Naive thymus-derived CD4-positive, alpha-beta T cell (primary cell): ENCODE measurements at regions of chr22 and their contacts with region 1.

Region 1: GRCh38 chr22:38201710-38202436 is at the start of gene MAFF:
- DNase-seq: peak; percentile 62 to 88 (median 72)
- ATAC-seq: peak; percentile 87
- H3K4me3 ChIP-seq: peak within 1 kb of the TSS; percentile 77
- H3K4me3 Mint-ChIP-seq: peak within 1 kb of the TSS; percentile 80 to 93 (median 88)
- H3K27ac ChIP-seq: peak within 1 kb of the TSS; percentile 88
- H3K27ac Mint-ChIP-seq: peak within 1 kb of the TSS; percentile 84 to 97 (median 89)
- H3K4me1 ChIP-seq: peaks cover 5 to 25% of the 10 kb centered on the region in 2 donors
- H3K4me1 Mint-ChIP-seq: peaks cover 10 to 33% (median 26%) of the 10 kb centered on the region in 7 donors
- H3K27me3 ChIP-seq: no peaks in the 10 kb centered on the region
- H3K27me3 Mint-ChIP-seq: no peaks in the 10 kb centered on the region
- total RNA-seq, gene MAFF: 4.8 to 72.6 (median 5.5) TPM

Region 2: GRCh38 chr22:38069372-38070249 is 132.3 kb before region 1 on chr22:
- CTCF ChIA-PET with region 1: no interaction called
- POLR2A ChIA-PET with region 1: no interaction called
- intact Hi-C with region 1: no loop called
- DNase-seq: no peak
- ATAC-seq: no peak
- H3K4me3 ChIP-seq: no peak overlapping the region
- H3K4me3 Mint-ChIP-seq: no peak overlapping the region
- H3K27ac ChIP-seq: no peak overlapping the region
- H3K27ac Mint-ChIP-seq: no peak overlapping the region
- H3K4me1 ChIP-seq: no peaks in the 10 kb centered on the region
- H3K4me1 Mint-ChIP-seq: no peaks in the 10 kb centered on the region
- H3K27me3 ChIP-seq: no peaks in the 10 kb centered on the region
- H3K27me3 Mint-ChIP-seq: no peaks in the 10 kb centered on the region

Region 3: DNA sequence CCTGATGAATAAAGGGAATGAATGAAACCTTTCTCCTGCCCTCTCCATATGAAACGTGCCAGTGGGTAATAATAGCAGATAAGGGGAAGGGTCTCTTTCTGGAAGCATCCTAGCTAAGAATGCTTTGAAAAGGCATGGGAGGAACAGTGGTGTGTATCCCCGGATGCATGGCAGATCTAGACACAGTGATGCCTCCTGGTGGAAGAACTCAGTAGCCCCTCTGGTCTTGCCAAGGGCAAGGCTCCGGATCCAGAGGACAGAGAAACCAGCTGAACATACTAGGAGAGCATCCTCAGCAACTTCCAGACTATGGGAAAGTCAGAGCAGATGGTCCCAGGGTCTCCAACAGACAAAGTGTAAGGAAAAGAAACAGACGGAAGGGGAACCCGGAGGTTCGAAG is 97.8 kb before region 1 on chr22:
- CTCF ChIA-PET with region 1: no interaction called
- POLR2A ChIA-PET with region 1: no interaction called
- intact Hi-C with region 1: no loop called
- DNase-seq: no peak
- ATAC-seq: no peak
- H3K4me3 ChIP-seq: no peak overlapping the region
- H3K4me3 Mint-ChIP-seq: no peak overlapping the region
- H3K27ac ChIP-seq: no peak overlapping the region
- H3K27ac Mint-ChIP-seq: no peak overlapping the region
- H3K4me1 ChIP-seq: no peaks in the 10 kb centered on the region
- H3K4me1 Mint-ChIP-seq: peaks cover 0 to 19% (median 9%) of the 10 kb centered on the region in 7 donors
- H3K27me3 ChIP-seq: no peaks in the 10 kb centered on the region
- H3K27me3 Mint-ChIP-seq: no peaks in the 10 kb centered on the region

Region 4: GRCh38 chr22:38114484-38115398 is 87.1 kb before region 1 on chr22:
- CTCF ChIA-PET with region 1: no interaction called
- POLR2A ChIA-PET with region 1: no interaction called
- intact Hi-C with region 1: loop called in 1 of 2 experiments (anchors 10 kb)
- DNase-seq: peak; percentile 42 to 83 (median 67)
- ATAC-seq: peak; percentile 92
- H3K4me3 ChIP-seq: no peak overlapping the region
- H3K4me3 Mint-ChIP-seq: peak overlapping the region in 1 of 10 donors; percentile 41
- H3K27ac ChIP-seq: no peak overlapping the region
- H3K27ac Mint-ChIP-seq: peak overlapping the region in 2 of 9 donors; percentile 57 to 81
- H3K4me1 ChIP-seq: no peaks in the 10 kb centered on the region
- H3K4me1 Mint-ChIP-seq: peaks cover 0 to 6% (median 4%) of the 10 kb centered on the region in 7 donors
- H3K27me3 ChIP-seq: no peaks in the 10 kb centered on the region
- H3K27me3 Mint-ChIP-seq: no peaks in the 10 kb centered on the region

Region 5: GRCh38 chr22:38176170-38176741 is 25.6 kb before region 1 on chr22:
- CTCF ChIA-PET with region 1: interaction called, 3 read pairs
- POLR2A ChIA-PET with region 1: interaction called, 21 read pairs
- intact Hi-C with region 1: loop called (anchors 1 kb)
- DNase-seq: peak in 5 of 9 donors; percentile 9 to 40 (median 26)
- ATAC-seq: peak; percentile 58
- H3K4me3 ChIP-seq: no peak overlapping the region
- H3K4me3 Mint-ChIP-seq: peak overlapping the region in 7 of 10 donors; percentile 38 to 73 (median 58)
- H3K27ac ChIP-seq: peak overlapping the region; percentile 12
- H3K27ac Mint-ChIP-seq: peak overlapping the region in 6 of 9 donors; percentile 8 to 87 (median 62)
- H3K4me1 ChIP-seq: peaks cover 29 to 43% of the 10 kb centered on the region in 2 donors
- H3K4me1 Mint-ChIP-seq: peaks cover 53 to 77% (median 64%) of the 10 kb centered on the region in 7 donors
- H3K27me3 ChIP-seq: no peaks in the 10 kb centered on the region
- H3K27me3 Mint-ChIP-seq: no peaks in the 10 kb centered on the region

Region 6: DNA sequence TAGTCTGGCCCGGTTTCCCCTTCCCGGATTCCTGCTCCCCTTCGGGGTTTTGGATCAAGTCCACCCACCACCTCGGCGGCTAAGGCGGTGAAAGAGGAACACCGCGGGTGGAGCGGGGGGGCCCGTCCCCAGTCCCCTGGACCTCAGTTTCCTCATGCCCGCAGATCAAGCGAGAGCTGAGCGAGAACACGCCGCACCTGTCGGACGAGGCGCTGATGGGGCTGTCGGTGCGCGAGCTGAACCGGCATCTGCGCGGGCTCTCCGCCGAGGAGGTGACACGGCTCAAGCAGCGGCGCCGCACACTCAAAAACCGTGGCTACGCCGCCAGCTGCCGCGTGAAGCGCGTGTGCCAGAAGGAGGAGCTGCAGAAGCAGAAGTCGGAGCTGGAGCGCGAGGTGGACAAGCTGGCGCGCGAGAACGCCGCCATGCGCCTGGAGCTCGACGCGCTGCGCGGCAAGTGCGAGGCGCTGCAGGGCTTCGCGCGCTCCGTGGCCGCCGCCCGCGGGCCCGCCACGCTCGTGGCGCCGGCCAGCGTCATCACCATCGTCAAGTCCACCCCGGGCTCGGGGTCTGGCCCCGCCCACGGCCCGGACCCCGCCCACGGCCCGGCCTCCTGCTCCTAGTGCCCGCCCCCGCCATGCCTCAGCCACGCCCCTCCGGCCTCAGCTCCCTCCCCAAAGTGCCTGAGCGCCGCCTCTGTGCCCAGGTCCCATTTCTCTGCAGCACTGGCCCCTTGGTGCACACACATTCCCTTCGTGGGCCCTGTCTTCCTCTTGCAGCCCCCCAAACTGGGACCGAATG is 12.6 kb after region 1 on chr22:
- CTCF ChIA-PET with region 1: interaction called, 3 read pairs
- POLR2A ChIA-PET with region 1: interaction called, 8 read pairs
- intact Hi-C with region 1: loop called in 1 of 2 experiments (anchors 1 kb)
- DNase-seq: peak; percentile 54 to 78 (median 69)
- ATAC-seq: peak; percentile 82
- H3K4me3 ChIP-seq: peak overlapping the region; percentile 30
- H3K4me3 Mint-ChIP-seq: peak overlapping the region in 9 of 10 donors; percentile 9 to 76 (median 69)
- H3K27ac ChIP-seq: peak overlapping the region; percentile 39
- H3K27ac Mint-ChIP-seq: peak overlapping the region in 3 of 9 donors; percentile 44 to 77 (median 57)
- H3K4me1 ChIP-seq: peaks cover 6 to 12% of the 10 kb centered on the region in 2 donors
- H3K4me1 Mint-ChIP-seq: peaks cover 11 to 30% (median 15%) of the 10 kb centered on the region in 7 donors
- H3K27me3 ChIP-seq: no peaks in the 10 kb centered on the region
- H3K27me3 Mint-ChIP-seq: no peaks in the 10 kb centered on the region

Region 7: DNA sequence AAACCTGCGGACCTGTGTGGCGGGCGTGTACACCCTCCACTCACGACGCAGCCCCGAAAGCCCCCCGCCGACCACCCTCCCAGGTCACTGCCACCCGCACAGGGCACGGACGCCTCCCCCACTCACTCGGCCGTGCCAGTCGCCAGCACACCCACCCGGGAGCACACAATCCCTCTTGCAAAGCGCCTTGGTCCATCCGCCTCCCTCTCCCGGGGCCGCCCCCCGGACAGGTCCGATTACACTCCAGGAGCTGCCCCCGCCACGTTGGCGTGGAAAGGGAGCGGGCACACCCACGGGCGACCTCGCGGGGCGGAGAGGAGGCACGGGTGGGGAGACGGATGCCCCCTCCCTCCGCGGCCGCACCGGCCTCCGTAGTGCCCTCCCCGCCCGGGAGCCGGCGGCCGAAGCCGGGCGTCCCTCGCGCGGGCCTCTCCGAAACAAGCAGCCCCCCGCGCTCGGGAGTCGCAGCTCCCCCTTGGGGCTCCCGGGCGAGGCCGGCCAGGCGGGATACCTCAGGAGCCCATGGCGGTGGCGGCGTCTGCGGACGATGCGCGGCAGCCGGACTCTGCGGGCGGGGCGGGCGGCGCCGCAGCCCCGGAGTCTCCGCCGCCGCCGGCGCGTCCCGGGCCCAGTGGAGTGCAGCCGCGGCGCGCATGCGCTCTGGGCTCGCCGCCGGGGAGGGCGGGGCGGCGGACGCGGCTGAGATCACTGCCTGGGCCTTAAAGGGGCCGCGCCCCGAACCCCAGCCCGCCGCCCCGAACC is 70.7 kb after region 1 on chr22 and contains the start of gene TMEM184B:
- CTCF ChIA-PET with region 1: no interaction called
- POLR2A ChIA-PET with region 1: interaction called, 3 read pairs
- intact Hi-C with region 1: loop called (anchors 2 kb)
- DNase-seq: peak; percentile 71 to 93 (median 87)
- ATAC-seq: peak; percentile 98
- H3K4me3 ChIP-seq: peak within 1 kb of the TSS; percentile 77
- H3K4me3 Mint-ChIP-seq: peak within 1 kb of the TSS; percentile 90 to 96 (median 94)
- H3K27ac ChIP-seq: peak within 1 kb of the TSS; percentile 89
- H3K27ac Mint-ChIP-seq: peak within 1 kb of the TSS; percentile 92 to 99 (median 96)
- H3K4me1 ChIP-seq: peaks cover 19 to 29% of the 10 kb centered on the region in 2 donors
- H3K4me1 Mint-ChIP-seq: peaks cover 33 to 62% (median 54%) of the 10 kb centered on the region in 7 donors
- H3K27me3 ChIP-seq: no peaks in the 10 kb centered on the region
- H3K27me3 Mint-ChIP-seq: peaks cover 0 to 8% (median 0%) of the 10 kb centered on the region in 5 donors
- total RNA-seq, gene TMEM184B: 26.9 to 41.3 (median 35.0) TPM

Region 8: DNA sequence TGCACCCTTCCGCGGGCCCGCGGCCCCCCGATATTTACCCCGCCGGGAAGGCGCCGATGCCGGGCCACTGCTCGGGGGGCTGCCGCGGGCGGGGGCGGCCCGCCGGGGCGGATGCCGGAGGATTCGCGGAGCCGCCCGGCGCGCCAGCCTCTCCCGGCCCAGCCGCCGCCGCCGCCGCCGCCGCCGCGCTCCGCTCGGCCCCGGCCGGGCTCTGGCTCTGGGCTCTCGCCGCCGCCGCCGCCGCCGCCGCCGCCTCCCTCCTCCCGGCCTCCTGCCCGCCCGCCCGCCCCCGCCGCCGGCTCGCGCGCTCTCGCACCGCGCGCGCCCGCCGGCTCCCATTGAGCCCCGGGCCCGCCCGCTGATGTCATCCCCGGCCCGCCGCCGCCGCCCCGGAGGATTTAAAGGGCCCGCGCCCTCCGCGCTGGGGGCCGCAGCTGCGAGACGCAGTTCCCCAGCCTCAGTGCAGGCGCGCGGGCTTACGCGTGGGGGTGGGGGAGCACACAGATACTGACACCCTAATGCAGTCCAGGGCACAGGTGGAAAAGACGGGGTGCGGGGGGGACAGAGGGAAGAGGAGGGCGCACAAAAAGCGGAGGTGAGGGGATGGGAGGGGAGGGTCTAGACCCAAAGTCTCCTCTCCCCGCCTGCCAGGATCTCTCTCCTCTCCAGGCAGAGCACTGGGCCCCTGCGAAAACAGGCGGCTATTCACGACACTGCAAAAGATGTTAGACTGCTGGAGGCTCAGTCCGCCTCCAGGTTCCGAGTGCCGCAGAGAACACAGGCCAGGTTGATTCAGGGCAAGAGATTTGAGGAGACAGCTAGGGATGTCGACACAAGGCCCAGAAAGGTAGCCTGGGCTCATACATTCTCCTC is 115.5 kb after region 1 on chr22 and contains the start of gene CSNK1E:
- CTCF ChIA-PET with region 1: no interaction called
- POLR2A ChIA-PET with region 1: no interaction called
- intact Hi-C with region 1: loop called (anchors 1 to 5 kb)
- DNase-seq: peak; percentile 67 to 85 (median 74)
- ATAC-seq: peak; percentile 79
- H3K4me3 ChIP-seq: peak within 1 kb of the TSS; percentile 62
- H3K4me3 Mint-ChIP-seq: peak within 1 kb of the TSS; percentile 84 to 92 (median 89)
- H3K27ac ChIP-seq: peak within 1 kb of the TSS; percentile 91
- H3K27ac Mint-ChIP-seq: peak within 1 kb of the TSS; percentile 94 to 97 (median 95)
- H3K4me1 ChIP-seq: peaks cover 28 to 39% of the 10 kb centered on the region in 2 donors
- H3K4me1 Mint-ChIP-seq: peaks cover 31 to 49% (median 42%) of the 10 kb centered on the region in 7 donors
- H3K27me3 ChIP-seq: no peaks in the 10 kb centered on the region
- H3K27me3 Mint-ChIP-seq: no peaks in the 10 kb centered on the region
- total RNA-seq, gene CSNK1E: 71.6 to 143 (median 91.9) TPM

Region 9: GRCh38 chr22:38398609-38399461 is 197.0 kb after region 1 on chr22:
- CTCF ChIA-PET with region 1: no interaction called
- POLR2A ChIA-PET with region 1: no interaction called
- intact Hi-C with region 1: loop called in 1 of 2 experiments (anchors 2 kb)
- DNase-seq: peak; percentile 74 to 91 (median 82)
- ATAC-seq: peak; percentile 93
- H3K4me3 ChIP-seq: peak overlapping the region; percentile 46
- H3K4me3 Mint-ChIP-seq: peak overlapping the region; percentile 78 to 93 (median 85)
- H3K27ac ChIP-seq: peak overlapping the region; percentile 69
- H3K27ac Mint-ChIP-seq: peak overlapping the region in 8 of 9 donors; percentile 55 to 84 (median 76)
- H3K4me1 ChIP-seq: no peaks in the 10 kb centered on the region
- H3K4me1 Mint-ChIP-seq: peaks cover 6 to 41% (median 33%) of the 10 kb centered on the region in 7 donors
- H3K27me3 ChIP-seq: no peaks in the 10 kb centered on the region
- H3K27me3 Mint-ChIP-seq: peaks cover 0 to 30% (median 0%) of the 10 kb centered on the region in 5 donors